MCF 10A (cell line): ENCODE measurements at regions of chr7 and their contacts with region 1.

Region 1: GRCh38 chr7:42237162-42237821 is at the start of gene GLI3:
- DNase-seq: peak; percentile 95
- H3K4me3 Mint-ChIP-seq: peak within 1 kb of the TSS; percentile 97
- H3K27ac Mint-ChIP-seq: peak within 1 kb of the TSS; percentile 96
- H3K4me1 Mint-ChIP-seq: peaks cover 45% of the 10 kb centered on the region
- H3K27me3 Mint-ChIP-seq: no peaks in the 10 kb centered on the region
- CTCF ChIP-seq: peak; percentile 12
- total RNA-seq, gene GLI3: 23.1 and 27.6 TPM in 2 replicates

Region 2: GRCh38 chr7:42023262-42023661 is 214.0 kb before region 1 on chr7:
- CTCF ChIA-PET with region 1: no interaction called
- POLR2A ChIA-PET with region 1: no interaction called
- intact Hi-C with region 1: no loop called
- DNase-seq: no peak
- H3K4me3 Mint-ChIP-seq: no peak overlapping the region
- H3K27ac Mint-ChIP-seq: no peak overlapping the region
- H3K4me1 Mint-ChIP-seq: no peaks in the 10 kb centered on the region
- H3K27me3 Mint-ChIP-seq: no peaks in the 10 kb centered on the region
- CTCF ChIP-seq: no peak

Region 3: DNA sequence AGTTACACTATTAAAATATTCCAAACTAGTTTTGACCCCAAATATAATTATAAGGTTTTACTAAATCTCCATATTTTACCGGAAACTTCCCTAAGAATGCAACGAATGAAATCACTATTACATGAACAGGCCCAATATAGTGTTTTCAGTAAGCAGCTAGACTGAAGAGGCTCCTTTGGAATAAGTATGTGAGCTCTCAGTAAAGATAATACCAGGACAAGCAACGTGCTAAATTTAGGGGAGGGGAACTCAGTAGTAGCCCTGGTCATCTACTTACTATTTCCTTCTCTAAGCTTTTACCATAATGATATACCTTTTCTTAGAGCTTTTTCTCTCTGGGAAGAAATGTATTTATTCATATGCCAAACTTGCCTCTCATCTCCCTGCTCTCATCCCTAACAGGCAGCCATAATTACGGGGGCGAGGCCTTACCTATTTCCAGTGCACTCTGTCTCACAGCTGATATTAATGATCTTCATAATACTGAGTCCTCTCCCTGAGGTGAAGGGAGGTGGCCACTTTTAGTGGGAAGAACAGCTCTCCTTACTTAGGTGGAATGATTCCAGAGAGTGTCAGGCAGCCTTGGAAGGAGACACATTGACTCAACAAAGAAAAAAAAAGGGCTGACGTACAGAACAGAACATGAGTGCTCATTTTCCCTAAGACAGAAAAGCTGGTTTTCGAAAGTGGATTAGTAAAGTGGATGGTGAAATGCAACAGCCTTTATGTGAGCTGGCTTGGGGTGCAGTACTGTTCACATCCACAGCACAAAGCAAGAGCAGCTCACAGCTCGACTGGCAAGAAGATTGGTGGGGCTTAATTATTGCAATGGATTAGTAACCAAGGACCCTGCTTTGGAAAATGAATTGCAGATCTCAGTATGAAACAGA is 165.7 kb before region 1 on chr7:
- CTCF ChIA-PET with region 1: interaction called, 5 read pairs
- POLR2A ChIA-PET with region 1: interaction called, 22 read pairs
- intact Hi-C with region 1: loop called (anchors 2 kb)
- DNase-seq: peak; percentile 65
- H3K4me3 Mint-ChIP-seq: peak overlapping the region; percentile 26
- H3K27ac Mint-ChIP-seq: peak overlapping the region; percentile 84
- H3K4me1 Mint-ChIP-seq: peaks cover 46% of the 10 kb centered on the region
- H3K27me3 Mint-ChIP-seq: no peaks in the 10 kb centered on the region
- CTCF ChIP-seq: no peak

Region 4: DNA sequence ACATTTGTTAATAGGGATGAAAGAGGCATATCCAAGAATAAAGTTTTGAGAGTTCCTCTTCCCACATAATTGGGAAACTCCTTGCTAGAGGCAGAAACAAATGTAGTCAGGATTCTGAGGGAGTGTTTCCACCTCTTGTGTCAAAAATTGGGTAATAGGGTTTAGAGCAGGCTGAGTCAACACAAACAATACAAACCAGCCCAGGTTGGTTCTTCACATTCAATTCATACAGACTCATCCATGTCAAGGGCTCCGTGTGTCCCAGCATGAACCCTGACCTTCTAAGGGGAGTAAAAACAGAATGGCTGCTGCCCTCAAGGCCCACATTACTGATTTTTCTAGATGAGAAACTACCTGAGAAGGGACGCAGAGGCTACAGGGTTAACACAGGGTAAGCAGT is 75.6 kb before region 1 on chr7:
- CTCF ChIA-PET with region 1: interaction called, 4 read pairs
- POLR2A ChIA-PET with region 1: interaction called, 7 read pairs
- intact Hi-C with region 1: loop called (anchors 5 kb)
- DNase-seq: peak; percentile 95
- H3K4me3 Mint-ChIP-seq: peak overlapping the region; percentile 28
- H3K27ac Mint-ChIP-seq: peak overlapping the region; percentile 95
- H3K4me1 Mint-ChIP-seq: peaks cover 34% of the 10 kb centered on the region
- H3K27me3 Mint-ChIP-seq: no peaks in the 10 kb centered on the region
- CTCF ChIP-seq: no peak

Region 5: DNA sequence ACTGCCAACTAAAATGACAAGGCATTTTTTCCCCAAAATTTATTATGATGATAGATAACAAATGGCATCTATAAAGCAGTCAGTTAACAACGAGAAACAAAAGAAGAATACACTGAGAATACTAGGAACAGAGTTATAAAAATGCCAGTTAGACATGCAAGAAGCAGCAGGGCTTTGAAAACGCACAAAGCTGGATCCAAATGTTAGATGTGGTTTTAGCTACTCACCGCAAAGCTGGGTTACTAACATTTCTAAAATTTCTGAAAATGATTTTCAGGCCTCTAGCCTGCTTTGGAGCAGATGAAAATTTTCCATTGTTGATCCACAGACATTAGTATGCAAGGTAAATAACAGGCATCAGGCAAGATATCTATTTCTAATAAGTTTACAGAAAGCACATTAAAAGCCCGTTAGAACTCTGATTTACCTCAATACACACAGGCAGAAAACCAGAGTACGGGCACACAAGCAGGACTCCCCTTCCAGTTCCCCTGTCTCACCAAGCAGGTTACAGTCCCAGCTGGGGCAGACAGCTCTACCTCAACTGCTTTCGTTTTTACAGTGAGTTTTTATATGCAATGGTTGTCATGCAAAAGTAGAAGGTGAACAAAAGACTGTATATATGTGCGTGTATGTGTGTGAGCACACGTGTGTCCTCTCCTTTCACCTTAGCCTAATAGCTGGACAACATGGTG is 38.2 kb before region 1 on chr7:
- CTCF ChIA-PET with region 1: interaction called, 3 read pairs
- POLR2A ChIA-PET with region 1: interaction called, 71 read pairs
- intact Hi-C with region 1: no loop called
- DNase-seq: no peak
- H3K4me3 Mint-ChIP-seq: no peak overlapping the region
- H3K27ac Mint-ChIP-seq: peak overlapping the region; percentile 81
- H3K4me1 Mint-ChIP-seq: peaks cover 38% of the 10 kb centered on the region
- H3K27me3 Mint-ChIP-seq: no peaks in the 10 kb centered on the region
- CTCF ChIP-seq: no peak

Region 6: GRCh38 chr7:42283553-42283952 is 46.3 kb after region 1 on chr7:
- CTCF ChIA-PET with region 1: no interaction called
- POLR2A ChIA-PET with region 1: interaction called, 11 read pairs
- intact Hi-C with region 1: no loop called
- DNase-seq: peak; percentile 95
- H3K4me3 Mint-ChIP-seq: no peak overlapping the region
- H3K27ac Mint-ChIP-seq: peak overlapping the region; percentile 31
- H3K4me1 Mint-ChIP-seq: peaks cover 32% of the 10 kb centered on the region
- H3K27me3 Mint-ChIP-seq: no peaks in the 10 kb centered on the region
- CTCF ChIP-seq: no peak

Region 7: GRCh38 chr7:42574685-42575084 is 337.4 kb after region 1 on chr7:
- CTCF ChIA-PET with region 1: interaction called, 4 read pairs
- POLR2A ChIA-PET with region 1: interaction called, 4 read pairs
- intact Hi-C with region 1: loop called (anchors 1 kb)
- DNase-seq: peak; percentile 31
- H3K4me3 Mint-ChIP-seq: no peak overlapping the region
- H3K27ac Mint-ChIP-seq: no peak overlapping the region
- H3K4me1 Mint-ChIP-seq: peaks cover 15% of the 10 kb centered on the region
- H3K27me3 Mint-ChIP-seq: no peaks in the 10 kb centered on the region
- CTCF ChIP-seq: peak; percentile 43

Region 8: DNA sequence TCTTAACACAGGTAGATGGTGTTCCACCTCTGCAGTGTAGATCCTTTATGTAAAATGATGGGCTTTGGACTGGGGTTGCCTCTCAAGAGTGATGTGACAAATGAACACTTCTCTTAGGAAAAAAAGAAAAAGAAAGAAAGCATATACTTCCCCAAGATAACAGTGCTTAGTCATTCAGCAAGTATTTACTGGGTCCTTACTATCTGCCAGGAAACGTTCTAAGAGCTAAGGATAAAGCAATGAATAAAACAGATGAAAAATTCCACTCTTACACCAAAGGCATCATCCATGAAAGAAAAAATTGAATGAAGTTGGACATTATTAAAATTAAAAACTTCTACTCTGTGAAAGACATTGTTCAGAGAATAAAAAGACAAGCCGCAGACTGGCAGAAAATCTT is 497.3 kb after region 1 on chr7:
- CTCF ChIA-PET with region 1: no interaction called
- POLR2A ChIA-PET with region 1: no interaction called
- intact Hi-C with region 1: no loop called
- DNase-seq: no peak
- H3K4me3 Mint-ChIP-seq: no peak overlapping the region
- H3K27ac Mint-ChIP-seq: no peak overlapping the region
- H3K4me1 Mint-ChIP-seq: no peaks in the 10 kb centered on the region
- H3K27me3 Mint-ChIP-seq: no peaks in the 10 kb centered on the region
- CTCF ChIP-seq: no peak

Region 9: GRCh38 chr7:42790196-42790595 is 552.9 kb after region 1 on chr7:
- CTCF ChIA-PET with region 1: no interaction called
- POLR2A ChIA-PET with region 1: no interaction called
- intact Hi-C with region 1: no loop called
- DNase-seq: peak; percentile 66
- H3K4me3 Mint-ChIP-seq: no peak overlapping the region
- H3K27ac Mint-ChIP-seq: no peak overlapping the region
- H3K4me1 Mint-ChIP-seq: peaks cover 6% of the 10 kb centered on the region
- H3K27me3 Mint-ChIP-seq: no peaks in the 10 kb centered on the region
- CTCF ChIP-seq: no peak